CD4-positive, alpha-beta T cell (primary cell): ENCODE measurements at regions of chr21 and their contacts with region 1.

Region 1: DNA sequence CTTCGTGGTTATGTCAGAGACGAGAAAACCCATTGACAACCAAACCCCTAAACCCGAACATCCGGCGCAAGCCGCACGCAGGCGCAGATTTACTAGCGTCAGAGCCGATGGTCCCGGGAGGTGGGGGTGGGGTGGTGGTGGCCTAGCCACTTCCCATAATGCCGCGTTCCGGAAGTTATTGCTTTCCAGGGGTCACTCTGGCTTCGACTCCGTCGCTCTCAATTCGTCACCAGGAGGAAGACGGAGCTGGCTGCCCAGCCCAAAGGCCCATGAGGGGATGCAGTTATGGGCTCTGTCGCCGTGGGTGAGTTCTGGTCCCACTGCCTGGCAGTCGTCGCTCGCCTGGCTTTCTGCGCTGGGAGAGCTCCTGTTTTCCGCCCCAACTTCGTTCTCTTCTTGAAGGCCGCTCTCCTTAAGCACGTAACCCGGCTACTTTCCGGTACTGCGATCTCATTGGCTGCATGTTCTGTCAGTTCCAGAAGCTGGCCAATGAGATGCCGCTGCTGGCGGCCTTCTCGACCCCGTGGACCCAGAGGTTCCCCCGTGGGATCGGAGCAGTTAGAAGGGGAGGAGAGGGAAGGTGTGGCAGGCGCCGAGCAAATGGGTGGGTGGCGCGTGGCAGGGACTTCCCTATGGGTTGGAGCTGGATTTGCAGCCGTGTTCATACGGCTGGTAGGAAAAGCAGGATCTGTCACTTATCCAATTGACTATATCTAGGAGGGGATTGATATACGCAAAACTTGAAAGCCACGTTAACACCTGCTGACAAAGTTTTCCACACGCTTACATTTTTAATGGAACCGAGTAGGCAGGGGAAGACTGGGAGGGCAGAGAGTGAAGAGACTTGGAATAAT is at the start of gene USP16:
- DNase-seq: peak; percentile 86 to 98 (median 90)
- ATAC-seq: peak; percentile 87
- H3K4me3 ChIP-seq: peak within 1 kb of the TSS; percentile 78
- H3K4me3 Mint-ChIP-seq: peak within 1 kb of the TSS; percentile 97
- H3K27ac ChIP-seq: peak within 1 kb of the TSS; percentile 97
- H3K27ac Mint-ChIP-seq: peak within 1 kb of the TSS; percentile 99
- H3K4me1 ChIP-seq: peaks cover 44% of the 10 kb centered on the region
- H3K4me1 Mint-ChIP-seq: peaks cover 61% of the 10 kb centered on the region
- H3K27me3 ChIP-seq: no peaks in the 10 kb centered on the region
- H3K27me3 Mint-ChIP-seq: no peaks in the 10 kb centered on the region
- CTCF ChIP-seq: no peak
- total RNA-seq, gene USP16: 79.7 to 81.7 TPM

Region 2: GRCh38 chr21:29002442-29003144 is 22.1 kb before region 1 on chr21:
- CTCF ChIA-PET with region 1: interaction called, 20 read pairs
- POLR2A ChIA-PET with region 1: interaction called, 479 read pairs
- intact Hi-C with region 1: loop called (anchors 1 to 2 kb)
- DNase-seq: peak; percentile 91 to 99 (median 94)
- ATAC-seq: peak; percentile 100
- H3K4me3 ChIP-seq: peak overlapping the region; percentile 65
- H3K4me3 Mint-ChIP-seq: peak overlapping the region; percentile 88
- H3K27ac ChIP-seq: peak overlapping the region; percentile 88 to 95
- H3K27ac Mint-ChIP-seq: peak overlapping the region; percentile 97
- H3K4me1 ChIP-seq: peaks cover 13% of the 10 kb centered on the region
- H3K4me1 Mint-ChIP-seq: peaks cover 20% of the 10 kb centered on the region
- H3K27me3 ChIP-seq: no peaks in the 10 kb centered on the region
- H3K27me3 Mint-ChIP-seq: no peaks in the 10 kb centered on the region
- CTCF ChIP-seq: no peak

Region 3: DNA sequence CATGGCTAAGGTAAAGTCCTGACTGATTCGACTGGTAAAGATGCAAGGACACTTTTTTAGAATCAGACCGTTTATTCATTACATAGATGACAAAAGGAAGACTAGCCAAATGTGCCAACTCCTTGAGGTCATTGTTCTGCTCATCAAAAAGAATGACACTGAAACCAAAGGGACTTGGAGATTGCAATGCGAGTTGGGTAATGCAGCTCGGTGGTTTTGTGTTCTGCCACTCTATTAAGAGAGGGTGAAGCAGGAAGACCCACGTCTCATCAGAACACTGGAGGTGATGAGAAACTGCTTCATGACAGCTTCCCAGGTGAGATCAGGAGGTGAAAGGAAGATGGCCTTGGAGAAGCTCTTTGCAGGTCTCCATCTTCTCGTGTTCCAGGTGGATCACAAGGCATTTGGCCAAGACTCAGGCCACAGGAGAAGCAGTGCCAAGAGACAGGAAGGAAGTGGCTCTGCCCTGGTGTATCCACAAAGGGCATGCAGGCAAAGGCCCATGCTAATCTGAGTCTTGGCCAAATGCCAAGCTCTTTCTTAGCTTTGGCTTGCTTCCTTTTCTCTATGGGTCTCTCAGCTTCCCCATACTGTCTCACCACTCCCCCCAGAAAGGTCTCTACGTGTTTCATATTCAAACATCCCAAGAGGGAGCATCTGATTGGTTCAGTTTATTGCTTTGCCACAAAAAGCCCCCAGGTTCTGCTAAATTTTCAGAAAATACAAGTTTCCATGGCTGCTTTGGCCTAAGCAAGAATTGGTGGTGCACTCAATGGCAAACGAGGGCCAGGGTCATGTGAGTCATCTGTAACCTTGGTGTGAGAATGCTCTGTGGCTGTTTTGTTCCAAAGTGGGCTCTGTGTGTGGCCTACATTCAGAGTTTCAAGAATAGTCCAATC is 54.4 kb after region 1 on chr21:
- CTCF ChIA-PET with region 1: no interaction called
- POLR2A ChIA-PET with region 1: interaction called, 71 read pairs
- intact Hi-C with region 1: no loop called
- DNase-seq: peak in 5 of 14 experiments; percentile 5 to 75 (median 63)
- ATAC-seq: peak; percentile 18
- H3K4me3 ChIP-seq: no peak overlapping the region
- H3K4me3 Mint-ChIP-seq: peak overlapping the region; percentile 64
- H3K27ac ChIP-seq: peak overlapping the region; percentile 58
- H3K27ac Mint-ChIP-seq: peak overlapping the region; percentile 95
- H3K4me1 ChIP-seq: peaks cover 41% of the 10 kb centered on the region
- H3K4me1 Mint-ChIP-seq: peaks cover 65% of the 10 kb centered on the region
- H3K27me3 ChIP-seq: no peaks in the 10 kb centered on the region
- H3K27me3 Mint-ChIP-seq: no peaks in the 10 kb centered on the region
- CTCF ChIP-seq: no peak